ENCODE measurements at regions of chr1 and their contacts with region 1.

Region 1: GRCh38 chr1:236103646-236104218 is 38.6 kb upstream of the GPR137B start:
- DNase-seq: peak; percentile 42
- ATAC-seq: peak; percentile 33
- H3K4me3 ChIP-seq: no peak overlapping the region
- H3K27ac ChIP-seq: no peak overlapping the region
- H3K4me1 ChIP-seq: peaks cover 32% of the 10 kb centered on the region
- H3K27me3 ChIP-seq: peaks cover 2 to 5% of the 10 kb centered on the region in 2 experiments; a peak in 1 of 5 replicates
- CTCF ChIP-seq: peak; percentile 82
- EP300 ChIP-seq: no peak
- POLR2A ChIP-seq: no peak
- RAD21 ChIP-seq: peak; percentile 68

Region 2: GRCh38 chr1:236451796-236452373 is 348.2 kb after region 1 on chr1:
- CTCF ChIA-PET with region 1: interaction called, 4 read pairs
- POLR2A ChIA-PET with region 1: no interaction called
- in situ Hi-C with region 1: no loop called
- intact Hi-C with region 1: loop called (anchors 2 kb)
- DNase-seq: peak; percentile 28
- ATAC-seq: peak; percentile 95
- H3K4me3 ChIP-seq: no peak overlapping the region
- H3K27ac ChIP-seq: no peak overlapping the region
- H3K4me1 ChIP-seq: no peaks in the 10 kb centered on the region
- H3K27me3 ChIP-seq: no peaks in the 10 kb centered on the region
- CTCF ChIP-seq: peak; percentile 73
- EP300 ChIP-seq: no peak
- POLR2A ChIP-seq: no peak
- RAD21 ChIP-seq: 0 out of 2 replicates have a peak, but pooled peaks have one; percentile 56

Region 3: DNA sequence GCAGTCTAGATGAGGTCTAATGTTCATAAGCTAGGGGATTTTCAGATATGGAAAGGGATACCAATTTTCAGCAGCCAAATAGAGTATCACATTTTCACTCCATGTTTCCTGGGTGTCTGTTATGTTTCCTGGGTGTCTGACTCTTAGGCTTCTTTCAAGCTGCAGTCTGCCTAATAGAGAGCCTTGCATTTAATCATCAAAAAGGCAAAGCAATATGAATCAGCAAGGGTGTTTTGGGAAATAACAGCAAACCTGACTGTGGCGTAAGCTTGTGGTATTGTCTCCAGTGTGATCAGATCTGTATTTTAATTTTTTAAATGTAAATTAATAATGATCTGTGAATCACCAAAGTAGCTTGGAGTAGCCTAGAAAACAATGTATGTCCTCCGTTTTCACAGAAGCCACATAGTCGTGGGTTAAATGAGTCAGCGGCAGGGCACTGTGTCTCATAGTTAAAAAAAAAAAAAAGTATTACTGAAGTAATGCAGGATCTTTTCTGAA is 430.5 kb after region 1 on chr1:
- CTCF ChIA-PET with region 1: interaction called, 10 read pairs
- POLR2A ChIA-PET with region 1: no interaction called
- in situ Hi-C with region 1: loop called (anchors 5 kb)
- intact Hi-C with region 1: loop called (anchors 1 kb)
- DNase-seq: no peak
- ATAC-seq: no peak
- H3K4me3 ChIP-seq: no peak overlapping the region
- H3K27ac ChIP-seq: no peak overlapping the region
- H3K4me1 ChIP-seq: peaks cover 63% of the 10 kb centered on the region
- H3K27me3 ChIP-seq: no peaks in the 10 kb centered on the region
- CTCF ChIP-seq: no peak
- EP300 ChIP-seq: no peak
- POLR2A ChIP-seq: no peak
- RAD21 ChIP-seq: no peak

Region 4: GRCh38 chr1:236759252-236759859 is 655.6 kb after region 1 on chr1:
- CTCF ChIA-PET with region 1: no interaction called
- POLR2A ChIA-PET with region 1: no interaction called
- in situ Hi-C with region 1: no loop called
- intact Hi-C with region 1: loop called (anchors 10 kb)
- DNase-seq: peak; percentile 35
- ATAC-seq: peak; percentile 53
- H3K4me3 ChIP-seq: no peak overlapping the region
- H3K27ac ChIP-seq: no peak overlapping the region
- H3K4me1 ChIP-seq: peaks cover 27% of the 10 kb centered on the region
- H3K27me3 ChIP-seq: no peaks in the 10 kb centered on the region
- CTCF ChIP-seq: peak; percentile 71
- EP300 ChIP-seq: no peak
- POLR2A ChIP-seq: no peak
- RAD21 ChIP-seq: no peak

Region 5: GRCh38 chr1:237124856-237125462 is 1021.2 kb after region 1 on chr1:
- CTCF ChIA-PET with region 1: interaction called, 3 read pairs
- POLR2A ChIA-PET with region 1: no interaction called
- in situ Hi-C with region 1: loop called (anchors 25 kb)
- intact Hi-C with region 1: loop called (anchors 10 kb)
- DNase-seq: peak; percentile 13
- ATAC-seq: peak; percentile 72
- H3K4me3 ChIP-seq: no peak overlapping the region
- H3K27ac ChIP-seq: no peak overlapping the region
- H3K4me1 ChIP-seq: no peaks in the 10 kb centered on the region
- H3K27me3 ChIP-seq: no peaks in the 10 kb centered on the region; a peak in 1 of 5 replicates
- CTCF ChIP-seq: peak; percentile 72
- EP300 ChIP-seq: no peak
- POLR2A ChIP-seq: no peak
- RAD21 ChIP-seq: no peak

Region 6: DNA sequence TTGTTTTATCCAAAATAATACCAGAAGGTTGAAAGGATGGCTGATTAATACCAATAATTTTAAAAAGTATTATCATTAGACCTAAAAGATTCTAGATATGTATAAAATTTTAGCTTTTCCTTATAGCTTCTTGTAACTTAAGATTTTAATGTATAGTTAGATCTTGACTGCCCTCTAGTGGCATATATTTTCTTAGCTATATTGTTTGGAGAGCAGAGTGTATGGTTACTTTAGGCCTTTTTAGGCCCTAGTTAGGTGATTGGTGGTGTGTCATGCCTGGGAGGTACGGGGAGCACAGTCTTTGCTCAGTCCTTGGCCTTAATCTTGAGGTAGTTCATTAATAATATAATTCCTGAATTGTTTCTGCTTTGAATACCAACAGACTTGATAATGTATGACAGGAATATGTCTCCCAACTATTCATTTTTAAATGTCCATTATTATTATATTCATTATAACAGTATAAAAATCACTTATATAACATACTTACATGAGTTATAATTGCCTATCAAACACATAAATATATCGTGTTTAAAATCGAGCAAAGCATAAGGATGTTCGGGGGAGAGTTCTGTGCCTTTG is 1458.6 kb after region 1 on chr1:
- CTCF ChIA-PET with region 1: no interaction called
- POLR2A ChIA-PET with region 1: interaction called, 3 read pairs
- in situ Hi-C with region 1: loop called (anchors 25 kb)
- intact Hi-C with region 1: no loop called
- DNase-seq: peak; percentile 61
- ATAC-seq: peak; percentile 91
- H3K4me3 ChIP-seq: no peak overlapping the region
- H3K27ac ChIP-seq: no peak overlapping the region
- H3K4me1 ChIP-seq: peaks cover 5% of the 10 kb centered on the region; the same call in 1 of the 2 replicates
- H3K27me3 ChIP-seq: no peaks in the 10 kb centered on the region
- CTCF ChIP-seq: peak; percentile 53
- EP300 ChIP-seq: no peak
- POLR2A ChIP-seq: no peak
- RAD21 ChIP-seq: no peak